Natural killer cell (primary cell): ENCODE measurements at regions of chr4 and their contacts with region 1.

Region 1: GRCh38 chr4:82373816-82374625 is at the start of gene HNRNPD:
- DNase-seq: peak; percentile 84 to 98
- ATAC-seq: peak; percentile 76 to 94 (median 84)
- H3K4me3 ChIP-seq: peak within 1 kb of the TSS; percentile 98
- H3K4me3 Mint-ChIP-seq: peak within 1 kb of the TSS; percentile 100
- H3K27ac ChIP-seq: peak within 1 kb of the TSS; percentile 99
- H3K27ac Mint-ChIP-seq: peak within 1 kb of the TSS; percentile 99 to 100
- H3K4me1 ChIP-seq: peaks cover 15% of the 10 kb centered on the region
- H3K4me1 Mint-ChIP-seq: peaks cover 57 to 69% of the 10 kb centered on the region in 2 donors
- H3K27me3 ChIP-seq: no peaks in the 10 kb centered on the region
- H3K27me3 Mint-ChIP-seq: peaks cover 0 to 3% of the 10 kb centered on the region in 2 donors
- CTCF ChIP-seq: no peak
- total RNA-seq, gene HNRNPD: 225 to 285 (median 270) TPM

Region 2: DNA sequence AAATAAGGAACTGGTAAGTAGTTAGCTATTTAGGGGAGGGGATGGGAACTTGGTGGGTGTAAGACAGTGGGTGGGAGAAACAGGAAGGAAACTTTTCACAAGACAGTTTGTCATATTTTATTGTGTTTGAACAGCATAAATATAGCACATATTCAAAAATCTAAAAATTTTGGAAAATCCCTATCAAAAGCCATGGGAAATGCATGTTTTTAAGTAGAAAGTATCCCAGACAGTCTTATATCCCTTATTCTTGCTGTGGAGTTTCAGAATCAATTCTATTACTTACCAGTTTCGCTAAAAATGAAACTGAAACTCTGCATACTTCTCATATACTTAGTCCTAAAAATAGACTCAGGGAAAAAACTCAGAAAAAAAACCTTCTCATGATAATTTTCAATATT is 880.0 kb before region 1 on chr4:
- intact Hi-C with region 1: loop called (anchors 5 kb)
- DNase-seq: peak in 1 of 2 donors; percentile 65
- ATAC-seq: peak; percentile 21 to 47 (median 42)
- H3K4me3 ChIP-seq: peak overlapping the region; percentile 29
- H3K4me3 Mint-ChIP-seq: peak overlapping the region; percentile 93
- H3K27ac ChIP-seq: peak overlapping the region; percentile 73
- H3K27ac Mint-ChIP-seq: peak overlapping the region; percentile 92
- H3K4me1 ChIP-seq: peaks cover 19% of the 10 kb centered on the region
- H3K4me1 Mint-ChIP-seq: peaks cover 47 to 55% of the 10 kb centered on the region in 2 donors
- H3K27me3 ChIP-seq: no peaks in the 10 kb centered on the region
- H3K27me3 Mint-ChIP-seq: no peaks in the 10 kb centered on the region
- CTCF ChIP-seq: no peak

Region 3: DNA sequence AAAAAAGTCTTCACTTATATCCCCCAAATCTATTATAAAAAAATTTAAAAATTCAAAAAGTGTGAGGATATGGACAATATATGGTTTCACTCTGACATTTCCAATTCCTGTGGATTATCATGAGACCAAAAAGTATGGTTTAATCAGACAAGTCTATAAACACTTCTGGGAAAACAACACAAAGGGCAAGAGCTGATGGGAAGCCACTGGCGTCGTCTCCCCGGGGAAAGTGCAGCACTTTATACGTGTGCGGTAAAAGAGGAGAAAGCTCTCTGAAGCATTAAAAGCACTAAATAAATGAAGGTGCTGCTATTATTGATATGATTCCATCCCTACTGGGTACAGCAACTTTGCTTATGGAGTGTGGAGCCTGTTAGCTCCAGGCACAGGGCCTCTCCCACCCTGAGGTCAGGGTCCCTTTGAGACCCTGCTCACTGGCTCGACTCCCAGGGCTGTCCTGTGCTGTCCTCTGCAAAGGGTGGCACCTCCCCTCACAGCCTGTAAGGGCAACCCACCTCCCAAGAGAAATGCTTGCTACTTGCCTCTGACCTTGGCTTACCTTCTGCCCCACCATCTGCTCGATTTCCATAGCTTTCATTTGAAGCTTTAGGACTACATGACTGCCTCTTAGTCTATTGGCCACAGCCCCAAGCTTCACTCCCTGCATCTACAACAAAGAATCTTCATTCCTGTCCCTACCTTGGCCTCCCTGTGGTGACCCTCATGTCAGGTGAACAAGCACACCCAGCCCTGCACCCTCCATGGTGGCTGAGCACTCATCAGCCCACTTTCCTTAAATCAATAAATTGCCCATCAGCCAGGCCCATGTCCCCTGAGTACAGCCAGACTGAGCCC is 248.9 kb before region 1 on chr4:
- intact Hi-C with region 1: no loop called
- DNase-seq: no peak
- ATAC-seq: no peak
- H3K4me3 ChIP-seq: no peak overlapping the region
- H3K4me3 Mint-ChIP-seq: no peak overlapping the region
- H3K27ac ChIP-seq: no peak overlapping the region
- H3K27ac Mint-ChIP-seq: no peak overlapping the region
- H3K4me1 ChIP-seq: no peaks in the 10 kb centered on the region
- H3K4me1 Mint-ChIP-seq: no peaks in the 10 kb centered on the region
- H3K27me3 ChIP-seq: no peaks in the 10 kb centered on the region
- H3K27me3 Mint-ChIP-seq: peaks cover 0 to 4% of the 10 kb centered on the region in 2 donors
- CTCF ChIP-seq: no peak

Region 4: GRCh38 chr4:82284858-82285805 is 88.9 kb before region 1 on chr4:
- intact Hi-C with region 1: loop called (anchors 1 kb)
- DNase-seq: peak; percentile 98 to 100
- ATAC-seq: peak; percentile 89 to 96 (median 91)
- H3K4me3 ChIP-seq: peak overlapping the region; percentile 53
- H3K4me3 Mint-ChIP-seq: peak overlapping the region; percentile 82
- H3K27ac ChIP-seq: peak overlapping the region; percentile 87
- H3K27ac Mint-ChIP-seq: peak overlapping the region; percentile 49 to 79
- H3K4me1 ChIP-seq: peaks cover 12% of the 10 kb centered on the region
- H3K4me1 Mint-ChIP-seq: peaks cover 14 to 19% of the 10 kb centered on the region in 2 donors
- H3K27me3 ChIP-seq: no peaks in the 10 kb centered on the region
- H3K27me3 Mint-ChIP-seq: peaks cover 9 to 15% of the 10 kb centered on the region in 2 donors
- CTCF ChIP-seq: peak; percentile 96

Region 5: GRCh38 chr4:82346126-82346525 is 27.9 kb before region 1 on chr4:
- intact Hi-C with region 1: no loop called
- DNase-seq: no peak
- ATAC-seq: no peak
- H3K4me3 ChIP-seq: no peak overlapping the region
- H3K4me3 Mint-ChIP-seq: no peak overlapping the region
- H3K27ac ChIP-seq: no peak overlapping the region
- H3K27ac Mint-ChIP-seq: peak overlapping the region; percentile 59 to 71
- H3K4me1 ChIP-seq: no peaks in the 10 kb centered on the region
- H3K4me1 Mint-ChIP-seq: peaks cover 18 to 38% of the 10 kb centered on the region in 2 donors
- H3K27me3 ChIP-seq: no peaks in the 10 kb centered on the region
- H3K27me3 Mint-ChIP-seq: no peaks in the 10 kb centered on the region
- CTCF ChIP-seq: no peak

Region 6: DNA sequence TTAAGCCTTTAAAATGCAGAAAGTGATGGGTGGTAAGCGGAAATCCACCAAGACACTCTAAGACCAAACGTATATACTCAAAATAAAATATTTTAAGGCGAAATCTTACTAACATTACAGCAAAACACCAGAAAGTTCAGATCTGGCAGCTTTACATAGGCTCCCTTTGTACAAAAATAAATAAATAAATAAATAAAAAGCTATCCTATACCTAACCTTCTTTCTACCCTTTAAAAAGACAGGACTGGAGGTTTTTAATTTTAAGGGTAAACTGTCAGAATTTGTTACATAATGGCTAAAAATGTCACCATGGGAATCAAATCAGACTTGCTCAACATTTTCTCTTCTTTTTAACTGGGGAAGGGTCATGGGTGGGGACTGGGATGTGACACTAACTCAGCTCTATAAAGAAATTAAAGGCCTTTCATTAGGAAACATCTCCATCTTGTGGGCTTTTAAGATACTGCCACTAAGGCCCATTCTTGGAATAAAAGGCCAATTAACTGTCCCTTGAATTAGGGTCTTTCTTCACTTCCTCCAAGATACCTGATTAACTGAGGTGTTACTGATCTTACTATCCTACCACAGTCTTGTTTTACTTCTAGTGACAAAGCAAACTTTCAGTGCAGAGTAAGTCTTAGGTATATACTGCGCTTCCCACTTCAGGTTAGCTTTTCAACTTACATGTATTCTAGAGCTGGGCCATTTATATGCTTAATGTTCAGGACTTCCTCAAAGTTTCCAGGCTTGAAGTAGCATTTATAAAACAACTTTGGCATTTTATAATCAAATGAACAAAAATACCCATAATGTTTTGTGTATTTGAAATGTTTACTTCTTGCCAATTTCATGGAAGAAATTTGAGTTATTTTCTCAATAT is 13.5 kb before region 1 on chr4:
- intact Hi-C with region 1: loop called (anchors 1 kb)
- DNase-seq: peak in 1 of 2 donors; percentile 61
- ATAC-seq: peak; percentile 67 to 84 (median 75)
- H3K4me3 ChIP-seq: no peak overlapping the region
- H3K4me3 Mint-ChIP-seq: peak overlapping the region; percentile 41
- H3K27ac ChIP-seq: peak overlapping the region; percentile 21
- H3K27ac Mint-ChIP-seq: peak overlapping the region; percentile 73 to 77
- H3K4me1 ChIP-seq: peaks cover 22% of the 10 kb centered on the region
- H3K4me1 Mint-ChIP-seq: peaks cover 82 to 89% of the 10 kb centered on the region in 2 donors
- H3K27me3 ChIP-seq: no peaks in the 10 kb centered on the region
- H3K27me3 Mint-ChIP-seq: no peaks in the 10 kb centered on the region
- CTCF ChIP-seq: peak; percentile 74

Region 7: GRCh38 chr4:82428969-82429727 is 55.1 kb after region 1 on chr4:
- intact Hi-C with region 1: loop called (anchors 1 kb)
- DNase-seq: peak; percentile 94 to 97
- ATAC-seq: peak; percentile 67 to 87 (median 70)
- H3K4me3 ChIP-seq: peak overlapping the region; percentile 100
- H3K4me3 Mint-ChIP-seq: peak overlapping the region; percentile 100
- H3K27ac ChIP-seq: peak overlapping the region; percentile 100
- H3K27ac Mint-ChIP-seq: peak overlapping the region; percentile 96
- H3K4me1 ChIP-seq: peaks cover 15% of the 10 kb centered on the region
- H3K4me1 Mint-ChIP-seq: peaks cover 46 to 60% of the 10 kb centered on the region in 2 donors
- H3K27me3 ChIP-seq: no peaks in the 10 kb centered on the region
- H3K27me3 Mint-ChIP-seq: no peaks in the 10 kb centered on the region
- CTCF ChIP-seq: peak; percentile 94

Region 8: GRCh38 chr4:83455281-83456129 is 1081.5 kb after region 1 on chr4 and contains the starts of genes HELQ and MRPS18C:
- intact Hi-C with region 1: loop called (anchors 5 kb)
- DNase-seq: peak; percentile 89 to 99
- ATAC-seq: peak; percentile 89 to 96 (median 93)
- H3K4me3 ChIP-seq: peak within 1 kb of the TSS; percentile 78
- H3K4me3 Mint-ChIP-seq: peak within 1 kb of the TSS; percentile 100
- H3K27ac ChIP-seq: peak within 1 kb of the TSS; percentile 94
- H3K27ac Mint-ChIP-seq: peak within 1 kb of the TSS; percentile 97 to 100
- H3K4me1 ChIP-seq: peaks cover 9% of the 10 kb centered on the region
- H3K4me1 Mint-ChIP-seq: peaks cover 35 to 39% of the 10 kb centered on the region in 2 donors
- H3K27me3 ChIP-seq: no peaks in the 10 kb centered on the region
- H3K27me3 Mint-ChIP-seq: no peaks in the 10 kb centered on the region
- CTCF ChIP-seq: no peak
- total RNA-seq, gene HELQ: 19.8 to 33.6 (median 29.9) TPM
- total RNA-seq, gene MRPS18C: 14.4 to 26.0 (median 18.1) TPM